HepG2 (cell line): ENCODE measurements at regions of chr6 and their contacts with region 1.

Region 1: GRCh38 chr6:163438940-163439335 is 24.4 kb downstream of the QKI start:
- DNase-seq: peak; percentile 49
- ATAC-seq: peak; percentile 67
- H3K4me3 ChIP-seq: no peak overlapping the region
- H3K27ac ChIP-seq: no peak overlapping the region
- H3K4me1 ChIP-seq: peaks cover 38% of the 10 kb centered on the region
- H3K27me3 ChIP-seq: no peaks in the 10 kb centered on the region
- CTCF ChIP-seq: no peak
- EP300 ChIP-seq: no peak
- POLR2A ChIP-seq: no peak
- RAD21 ChIP-seq: no peak

Region 2: DNA sequence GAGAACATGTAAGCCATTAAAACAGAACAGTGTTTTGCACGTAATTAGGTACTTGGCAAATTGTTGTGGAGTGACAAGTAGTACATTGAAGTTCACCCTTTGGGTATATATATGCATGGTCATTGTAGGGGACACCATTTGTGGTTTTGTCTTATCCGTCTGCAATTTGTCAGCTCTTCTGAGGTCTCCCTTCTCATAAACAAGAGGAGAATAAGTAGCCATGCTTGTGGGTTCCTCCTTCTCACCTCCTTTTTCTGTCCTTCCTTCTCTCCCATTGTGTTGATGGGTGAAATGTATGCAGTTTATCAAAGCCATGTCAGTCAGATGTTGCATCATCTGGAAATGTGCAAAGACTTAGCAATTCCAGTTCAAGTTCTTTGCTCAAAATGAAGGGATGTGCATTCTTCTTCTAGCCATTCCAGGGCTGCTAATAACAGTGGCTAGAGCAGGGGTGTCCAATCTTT is 46.5 kb after region 1 on chr6:
- CTCF ChIA-PET with region 1: no interaction called
- POLR2A ChIA-PET with region 1: no interaction called
- in situ Hi-C with region 1: no loop called
- intact Hi-C with region 1: no loop called
- DNase-seq: no peak
- ATAC-seq: no peak
- H3K4me3 ChIP-seq: no peak overlapping the region
- H3K27ac ChIP-seq: no peak overlapping the region
- H3K4me1 ChIP-seq: no peaks in the 10 kb centered on the region
- H3K27me3 ChIP-seq: no peaks in the 10 kb centered on the region
- CTCF ChIP-seq: no peak
- EP300 ChIP-seq: no peak
- POLR2A ChIP-seq: no peak
- RAD21 ChIP-seq: no peak

Region 3: GRCh38 chr6:163543321-163543720 is 104.4 kb after region 1 on chr6:
- CTCF ChIA-PET with region 1: no interaction called
- POLR2A ChIA-PET with region 1: no interaction called
- in situ Hi-C with region 1: loop called (anchors 10 kb)
- intact Hi-C with region 1: no loop called
- DNase-seq: no peak
- ATAC-seq: no peak
- H3K4me3 ChIP-seq: no peak overlapping the region
- H3K27ac ChIP-seq: no peak overlapping the region
- H3K4me1 ChIP-seq: no peaks in the 10 kb centered on the region
- H3K27me3 ChIP-seq: no peaks in the 10 kb centered on the region
- CTCF ChIP-seq: no peak
- EP300 ChIP-seq: no peak
- POLR2A ChIP-seq: no peak
- RAD21 ChIP-seq: no peak